Psoas muscle (tissue), 8 donors: ENCODE measurements at regions of chr10 and their contacts with region 1.

Region 1: GRCh38 chr10:100878291-100878910 is 34.4 kb upstream of the SLF2 start:
- DNase-seq: peak in 1 of 2 donors; percentile 34
- ATAC-seq: peak; percentile 65 to 82 (median 77)
- H3K4me3 ChIP-seq: no peak overlapping the region
- H3K27ac ChIP-seq: no peak overlapping the region
- H3K4me1 ChIP-seq: no peaks in the 10 kb centered on the region
- H3K27me3 ChIP-seq: peaks cover 0 to 27% (median 2%) of the 10 kb centered on the region in 3 donors
- CTCF ChIP-seq: peak; percentile 53

Region 2: DNA sequence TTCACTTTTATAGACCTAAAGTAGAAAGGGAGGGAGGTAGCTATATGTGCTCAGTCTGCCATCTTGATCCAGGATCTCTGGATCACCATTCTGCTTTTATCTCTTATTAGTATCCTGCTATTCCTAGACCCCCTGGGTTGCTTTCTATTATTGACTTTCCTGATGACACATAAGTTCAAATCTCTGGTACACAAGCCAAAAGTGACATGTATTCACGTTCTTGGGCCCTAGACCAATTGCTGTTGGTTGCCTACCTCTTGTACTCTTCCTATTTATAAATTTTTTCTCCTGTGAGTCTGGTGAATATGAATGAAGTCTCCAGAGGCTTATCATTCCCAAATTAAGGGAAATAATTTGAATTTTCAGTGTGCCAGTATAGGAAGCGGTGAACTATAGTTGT is 925.6 kb before region 1 on chr10:
- intact Hi-C with region 1: no loop called
- DNase-seq: no peak
- ATAC-seq: peak in 1 of 4 donors; percentile 55
- H3K4me3 ChIP-seq: no peak overlapping the region
- H3K27ac ChIP-seq: no peak overlapping the region
- H3K4me1 ChIP-seq: no peaks in the 10 kb centered on the region
- H3K27me3 ChIP-seq: no peaks in the 10 kb centered on the region
- CTCF ChIP-seq: no peak

Region 3: GRCh38 chr10:100338434-100339036 is 539.9 kb before region 1 on chr10:
- intact Hi-C with region 1: loop called in 1 of 2 experiments (anchors 10 kb)
- DNase-seq: peak; percentile 71 to 86
- ATAC-seq: peak; percentile 66 to 85 (median 74)
- H3K4me3 ChIP-seq: no peak overlapping the region
- H3K27ac ChIP-seq: no peak overlapping the region
- H3K4me1 ChIP-seq: peaks cover 15% of the 10 kb centered on the region
- H3K27me3 ChIP-seq: no peaks in the 10 kb centered on the region
- CTCF ChIP-seq: peak; percentile 95

Region 4: DNA sequence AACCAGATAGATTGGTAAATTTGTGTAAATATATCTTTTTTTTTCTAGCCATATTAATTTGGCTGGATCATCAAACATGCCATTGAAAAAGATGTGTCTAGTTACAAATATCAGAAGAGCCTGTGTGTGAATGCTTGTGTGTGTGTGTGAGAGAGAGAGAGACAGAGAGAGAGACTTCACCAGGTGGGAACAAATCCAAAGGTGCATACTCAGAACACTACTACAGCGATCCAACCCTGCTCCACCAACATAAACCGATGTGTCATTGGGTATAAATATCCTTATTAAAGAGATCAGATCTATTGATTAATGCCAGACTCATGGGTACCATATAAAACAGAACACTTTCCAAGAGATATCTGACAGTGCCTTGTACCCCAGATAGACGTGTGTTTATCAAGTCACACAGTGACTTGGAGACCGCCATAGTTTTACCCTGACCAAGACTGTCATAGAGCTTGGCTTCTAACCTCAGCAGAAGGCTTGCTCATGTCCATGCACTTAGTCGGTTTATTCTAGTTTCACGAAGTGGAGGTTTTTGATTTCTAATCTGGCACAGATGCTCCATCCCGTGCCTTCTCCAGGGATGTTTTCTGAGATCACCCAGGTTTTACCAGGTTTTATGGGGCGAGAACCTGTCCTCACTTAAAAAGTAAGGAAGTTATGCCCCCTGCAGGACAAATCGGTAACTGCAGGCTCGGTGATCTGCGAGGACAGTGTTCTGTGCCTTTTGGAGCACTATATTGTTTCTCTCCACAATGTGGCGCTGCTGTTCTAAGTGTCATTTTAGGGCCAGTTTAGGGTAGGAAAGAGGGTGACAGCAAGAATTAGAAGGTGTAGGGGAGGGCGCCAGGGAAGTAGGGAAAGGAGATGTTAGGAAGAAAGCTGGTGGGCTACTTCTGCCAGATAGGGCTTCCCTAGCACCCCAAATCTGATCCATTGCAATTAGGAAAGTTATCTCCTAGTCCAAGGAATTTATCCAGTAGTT is 444.9 kb before region 1 on chr10:
- intact Hi-C with region 1: loop called in 1 of 2 experiments (anchors 10 kb)
- DNase-seq: peak; percentile 88 to 91
- ATAC-seq: peak; percentile 92 to 97 (median 95)
- H3K4me3 ChIP-seq: no peak overlapping the region
- H3K27ac ChIP-seq: no peak overlapping the region
- H3K4me1 ChIP-seq: peaks cover under 1% of the 10 kb centered on the region
- H3K27me3 ChIP-seq: peaks cover 0 to 4% (median 0%) of the 10 kb centered on the region in 3 donors
- CTCF ChIP-seq: peak; percentile 100

Region 5: DNA sequence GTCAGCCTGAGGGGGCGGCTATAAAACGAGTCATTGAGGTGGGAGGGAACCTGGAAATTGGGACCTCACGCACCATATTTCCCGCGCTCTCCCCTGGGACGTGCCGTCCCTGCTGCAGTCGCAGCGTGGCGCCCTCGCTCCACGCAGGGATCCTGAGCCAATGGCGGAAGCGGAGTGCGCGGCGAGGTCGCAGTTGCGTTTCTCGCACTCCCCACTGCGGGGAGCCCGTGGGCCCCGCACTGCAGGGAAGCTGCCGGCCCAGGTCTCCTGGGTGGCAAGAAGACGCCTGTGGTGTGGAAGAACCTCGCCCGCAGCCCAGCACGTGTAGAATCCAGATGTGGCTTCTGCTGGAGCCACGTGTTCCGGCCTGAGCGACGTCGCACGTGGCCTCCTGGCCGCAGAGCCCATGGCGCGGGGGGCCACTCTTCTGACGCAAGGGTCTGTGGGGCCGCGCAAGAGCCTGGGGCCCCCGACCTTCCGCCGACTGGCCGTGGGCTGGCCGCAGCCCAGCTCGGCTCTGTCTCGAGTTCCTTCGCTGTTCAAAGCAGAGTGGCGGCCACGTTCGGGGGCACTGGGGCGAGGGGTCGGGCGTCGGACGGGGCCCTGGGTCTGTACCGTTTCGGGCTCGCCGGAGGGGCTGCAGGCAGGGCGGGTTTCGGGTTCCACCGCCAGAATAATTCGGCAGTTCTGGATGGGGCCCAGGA is 316.2 kb before region 1 on chr10:
- intact Hi-C with region 1: loop called (anchors 5 to 10 kb)
- DNase-seq: peak; percentile 64 to 78
- ATAC-seq: peak; percentile 87 to 94 (median 91)
- H3K4me3 ChIP-seq: peak overlapping the region; percentile 28
- H3K27ac ChIP-seq: no peak overlapping the region
- H3K4me1 ChIP-seq: peaks cover 11% of the 10 kb centered on the region
- H3K27me3 ChIP-seq: peaks cover 0 to 54% (median 26%) of the 10 kb centered on the region in 3 donors
- CTCF ChIP-seq: peak; percentile 72

Region 6: GRCh38 chr10:100670828-100671479 is 207.4 kb before region 1 on chr10:
- intact Hi-C with region 1: loop called in 1 of 2 experiments (anchors 5 kb)
- DNase-seq: peak in 1 of 2 donors; percentile 33
- ATAC-seq: peak; percentile 52 to 59 (median 55)
- H3K4me3 ChIP-seq: no peak overlapping the region
- H3K27ac ChIP-seq: no peak overlapping the region
- H3K4me1 ChIP-seq: no peaks in the 10 kb centered on the region
- H3K27me3 ChIP-seq: peaks cover 6 to 92% (median 25%) of the 10 kb centered on the region in 3 donors
- CTCF ChIP-seq: peak; percentile 72